Right ventricle myocardium inferior (tissue), 1 donor: ENCODE measurements at regions of chr22 and their contacts with region 1.

Region 1: GRCh38 chr22:37887610-37888378 is 18.3 kb upstream of the MICALL1 start:
- DNase-seq: no peak
- ATAC-seq: peak; percentile 64

Region 2: GRCh38 chr22:37932821-37933578 is 45.2 kb after region 1 on chr22:
- intact Hi-C with region 1: loop called (anchors 1 kb)
- DNase-seq: peak; percentile 69
- ATAC-seq: no peak

Region 3: GRCh38 chr22:37965940-37966664 is 78.3 kb after region 1 on chr22:
- intact Hi-C with region 1: loop called (anchors 1 kb)
- DNase-seq: no peak
- ATAC-seq: peak; percentile 54